ENCODE measurements at regions of chr12 and their contacts with region 1.

Region 1: GRCh38 chr12:57229634-57230380 is at the start of gene SHMT2:
- DNase-seq: peak; percentile 97
- ATAC-seq: peak; percentile 82
- H3K4me3 ChIP-seq: peak within 1 kb of the TSS; percentile 88
- H3K27ac ChIP-seq: peak within 1 kb of the TSS; percentile 74
- H3K4me1 ChIP-seq: peaks cover 19% of the 10 kb centered on the region
- H3K27me3 ChIP-seq: no peaks in the 10 kb centered on the region
- CTCF ChIP-seq: no peak
- total RNA-seq, gene SHMT2: 210 and 263 TPM in 2 replicates

Region 2: GRCh38 chr12:57190037-57190436 is 39.8 kb before region 1 on chr12:
- CTCF ChIA-PET with region 1: no interaction called
- POLR2A ChIA-PET with region 1: no interaction called
- intact Hi-C with region 1: no loop called
- DNase-seq: no peak
- ATAC-seq: peak; percentile 33; the same call in 1 of the 2 replicates
- H3K4me3 ChIP-seq: no peak overlapping the region
- H3K27ac ChIP-seq: no peak overlapping the region
- H3K4me1 ChIP-seq: no peaks in the 10 kb centered on the region
- H3K27me3 ChIP-seq: no peaks in the 10 kb centered on the region
- CTCF ChIP-seq: no peak

Region 3: DNA sequence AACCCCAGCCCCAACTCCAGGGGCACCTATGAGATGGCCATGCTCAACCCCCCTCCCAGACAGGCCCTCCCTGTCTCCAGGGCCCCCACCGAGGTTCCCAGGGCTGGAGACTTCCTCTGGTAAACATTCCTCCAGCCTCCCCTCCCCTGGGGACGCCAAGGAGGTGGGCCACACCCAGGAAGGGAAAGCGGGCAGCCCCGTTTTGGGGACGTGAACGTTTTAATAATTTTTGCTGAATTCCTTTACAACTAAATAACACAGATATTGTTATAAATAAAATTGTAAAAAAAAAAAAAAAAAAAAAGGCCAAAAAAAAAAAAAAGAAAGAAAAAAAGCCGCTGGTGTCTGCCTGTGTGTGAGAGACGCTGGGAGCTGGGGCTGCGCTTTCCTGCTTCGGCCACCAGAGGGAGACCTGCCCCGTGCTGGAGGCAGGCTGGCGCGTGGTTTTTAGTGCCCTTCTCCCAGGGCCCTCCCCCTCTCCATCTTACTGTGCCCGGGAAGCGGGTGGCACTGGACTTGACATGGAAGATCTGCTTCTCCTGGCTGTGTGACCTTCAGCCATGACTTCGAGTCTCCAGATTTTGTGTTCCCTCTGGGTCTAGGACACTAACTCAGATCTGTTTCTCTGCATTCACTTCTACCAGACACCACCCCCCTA is 16.6 kb before region 1 on chr12:
- CTCF ChIA-PET with region 1: interaction called, 3 read pairs
- POLR2A ChIA-PET with region 1: no interaction called
- intact Hi-C with region 1: loop called (anchors 1 kb)
- DNase-seq: peak; percentile 89
- ATAC-seq: peak; percentile 48
- H3K4me3 ChIP-seq: no peak overlapping the region
- H3K27ac ChIP-seq: no peak overlapping the region
- H3K4me1 ChIP-seq: peaks cover 30% of the 10 kb centered on the region
- H3K27me3 ChIP-seq: peaks cover 19% of the 10 kb centered on the region
- CTCF ChIP-seq: peak; percentile 81

Region 4: GRCh38 chr12:57352166-57352565 is 122.4 kb after region 1 on chr12:
- CTCF ChIA-PET with region 1: no interaction called
- POLR2A ChIA-PET with region 1: no interaction called
- intact Hi-C with region 1: no loop called
- DNase-seq: peak; percentile 8
- ATAC-seq: no peak
- H3K4me3 ChIP-seq: no peak overlapping the region
- H3K27ac ChIP-seq: no peak overlapping the region
- H3K4me1 ChIP-seq: no peaks in the 10 kb centered on the region
- H3K27me3 ChIP-seq: no peaks in the 10 kb centered on the region
- CTCF ChIP-seq: no peak

Region 5: DNA sequence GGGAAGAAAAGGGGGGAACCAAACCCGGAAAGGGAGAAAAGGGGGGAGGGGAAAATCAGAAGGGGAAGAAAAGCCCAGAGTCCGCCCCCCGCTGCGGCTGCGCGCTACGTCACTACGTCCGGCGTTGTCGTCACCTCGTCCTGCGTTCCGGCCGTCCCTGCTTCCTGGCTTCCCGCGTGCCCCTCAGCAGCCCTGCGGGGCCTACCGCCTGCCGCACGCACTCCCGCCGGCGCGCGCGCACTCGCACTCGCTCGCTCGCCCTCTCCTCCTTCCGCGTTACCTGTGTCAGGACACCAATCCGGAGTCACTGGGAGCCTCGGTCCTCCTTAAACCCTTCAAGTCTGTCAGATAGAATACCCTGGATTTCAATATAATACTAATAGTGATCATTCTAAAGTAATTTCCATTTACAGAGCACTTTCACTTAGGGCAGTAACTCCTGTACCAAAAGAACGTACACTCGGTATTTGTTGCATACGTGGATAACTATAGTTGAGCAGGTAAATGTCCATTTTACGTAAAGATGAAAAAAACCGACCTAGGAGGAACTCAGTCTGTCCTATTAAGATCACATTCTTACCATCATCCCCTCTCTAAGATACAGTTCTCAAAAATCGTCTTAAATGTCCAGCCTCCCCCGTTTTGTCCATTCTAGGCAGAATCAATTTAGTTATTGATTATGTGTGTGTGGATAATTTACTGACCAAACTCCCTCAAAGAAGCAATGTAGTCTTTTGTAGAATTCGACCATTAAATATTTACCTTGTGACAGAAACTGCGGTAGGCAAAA is 201.3 kb after region 1 on chr12 and contains the start of gene R3HDM2:
- CTCF ChIA-PET with region 1: no interaction called
- POLR2A ChIA-PET with region 1: interaction called, 13 read pairs
- intact Hi-C with region 1: no loop called
- DNase-seq: peak; percentile 95
- ATAC-seq: peak; percentile 95
- H3K4me3 ChIP-seq: peak within 1 kb of the TSS; percentile 85
- H3K27ac ChIP-seq: peak within 1 kb of the TSS; percentile 48
- H3K4me1 ChIP-seq: peaks cover 14% of the 10 kb centered on the region
- H3K27me3 ChIP-seq: no peaks in the 10 kb centered on the region
- CTCF ChIP-seq: no peak
- total RNA-seq, gene R3HDM2: 14.0 and 15.7 TPM in 2 replicates